ENCODE measurements at regions of chr3 and their contacts with region 1.

Region 1: GRCh38 chr3:52231502-52232293 is 6.3 kb upstream of the TLR9 start:
- DNase-seq: peak; percentile 89
- ATAC-seq: peak; percentile 93
- H3K4me3 ChIP-seq: no peak overlapping the region
- H3K4me3 Mint-ChIP-seq: peak overlapping the region; percentile 37
- H3K27ac ChIP-seq: no peak overlapping the region
- H3K27ac Mint-ChIP-seq: peak overlapping the region; percentile 85
- H3K4me1 ChIP-seq: peaks cover 20 to 44% of the 10 kb centered on the region in 2 donors
- H3K4me1 Mint-ChIP-seq: peaks cover 49% of the 10 kb centered on the region
- H3K27me3 ChIP-seq: no peaks in the 10 kb centered on the region
- H3K27me3 Mint-ChIP-seq: no peaks in the 10 kb centered on the region
- CTCF ChIP-seq: peak; percentile 94

Region 2: DNA sequence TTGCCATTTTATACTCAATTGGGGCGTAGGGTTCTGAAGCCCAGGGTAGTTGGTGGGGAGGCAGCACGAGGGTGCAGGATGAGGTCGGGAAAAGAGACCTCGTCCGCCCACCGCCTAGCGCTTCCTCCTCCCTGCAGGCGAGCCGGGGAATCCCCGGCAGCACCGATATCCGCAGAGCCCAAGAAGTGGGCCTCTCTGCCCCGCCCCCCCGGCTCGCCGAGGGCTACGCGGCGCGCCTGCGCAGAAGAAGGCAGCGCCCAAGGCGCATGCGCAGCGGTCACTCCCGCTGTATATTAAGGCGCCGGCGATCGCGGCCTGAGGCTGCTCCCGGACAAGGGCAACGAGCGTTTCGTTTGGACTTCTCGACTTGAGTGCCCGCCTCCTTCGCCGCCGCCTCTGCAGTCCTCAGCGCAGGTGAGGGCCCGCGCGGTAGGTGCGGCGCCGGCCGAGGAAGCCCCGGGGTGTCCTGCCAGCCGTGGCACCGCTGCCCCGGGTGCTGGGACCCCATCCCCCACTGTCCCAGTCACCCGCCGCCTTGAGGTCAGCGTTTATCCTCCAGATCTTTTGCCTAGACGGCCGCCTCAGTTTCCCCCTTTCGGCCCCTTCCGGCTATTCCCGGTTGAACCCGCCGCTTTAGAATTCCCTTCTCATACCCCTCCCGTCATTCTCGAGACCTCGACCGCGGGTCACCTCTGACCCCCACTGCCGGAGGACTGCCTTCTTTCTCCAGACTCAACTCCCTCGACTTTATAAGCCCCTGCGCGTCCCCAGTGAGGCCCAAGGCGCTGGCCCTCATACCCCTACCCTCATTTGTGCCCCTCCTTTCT is 33.6 kb before region 1 on chr3 and contains the start of gene ALAS1:
- CTCF ChIA-PET with region 1: interaction called, 3 read pairs
- POLR2A ChIA-PET with region 1: interaction called, 11 read pairs
- intact Hi-C with region 1: no loop called
- DNase-seq: peak; percentile 96
- ATAC-seq: peak; percentile 96
- H3K4me3 ChIP-seq: peak within 1 kb of the TSS; percentile 9 to 90 (median 86)
- H3K4me3 Mint-ChIP-seq: peak within 1 kb of the TSS; percentile 92
- H3K27ac ChIP-seq: peak within 1 kb of the TSS; percentile 41 to 79
- H3K27ac Mint-ChIP-seq: peak within 1 kb of the TSS; percentile 90
- H3K4me1 ChIP-seq: peaks cover 19 to 33% of the 10 kb centered on the region in 2 donors
- H3K4me1 Mint-ChIP-seq: peaks cover 42% of the 10 kb centered on the region
- H3K27me3 ChIP-seq: no peaks in the 10 kb centered on the region
- H3K27me3 Mint-ChIP-seq: no peaks in the 10 kb centered on the region
- CTCF ChIP-seq: no peak
- total RNA-seq, gene ALAS1: 26.1 and 28.3 TPM in 2 replicates

Region 3: DNA sequence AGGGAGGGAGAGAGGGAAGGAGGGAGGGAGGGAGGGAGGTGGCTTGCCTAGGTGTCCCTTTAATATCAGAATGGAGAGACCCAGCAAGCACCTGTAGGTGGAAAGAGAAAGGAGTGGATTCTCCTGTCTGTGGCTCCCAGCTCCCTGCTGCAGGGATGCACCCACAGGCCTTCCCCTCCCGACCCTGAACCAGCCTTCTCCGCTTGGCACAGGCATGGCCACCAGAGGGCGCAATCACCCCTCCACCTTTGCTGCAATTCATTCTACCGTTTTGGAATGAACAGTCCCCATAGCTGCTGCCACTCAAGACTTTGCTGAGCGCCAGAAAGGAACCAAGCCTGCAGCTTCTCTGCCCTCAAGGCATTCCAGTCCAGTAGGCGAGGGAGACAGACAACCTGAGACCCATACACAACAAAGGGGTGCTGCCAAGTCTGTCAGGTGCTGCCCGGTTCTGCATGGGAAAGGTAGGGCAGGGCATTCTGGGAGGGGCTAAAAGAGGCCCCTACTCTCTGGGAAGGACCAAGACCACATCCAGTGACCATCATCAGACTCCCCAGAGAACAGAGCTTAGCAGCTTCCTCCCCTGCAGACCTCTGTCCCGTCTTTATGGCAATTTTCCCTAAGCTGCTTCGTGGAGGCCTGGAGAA is 11.2 kb before region 1 on chr3:
- CTCF ChIA-PET with region 1: interaction called, 237 read pairs
- POLR2A ChIA-PET with region 1: interaction called, 28 read pairs
- intact Hi-C with region 1: loop called (anchors 1 kb)
- DNase-seq: peak; percentile 85
- ATAC-seq: peak; percentile 59
- H3K4me3 ChIP-seq: no peak overlapping the region
- H3K4me3 Mint-ChIP-seq: peak overlapping the region; percentile 66
- H3K27ac ChIP-seq: no peak overlapping the region
- H3K27ac Mint-ChIP-seq: peak overlapping the region; percentile 86
- H3K4me1 ChIP-seq: peaks cover 64 to 90% of the 10 kb centered on the region in 2 donors
- H3K4me1 Mint-ChIP-seq: peaks cover 78% of the 10 kb centered on the region
- H3K27me3 ChIP-seq: no peaks in the 10 kb centered on the region
- H3K27me3 Mint-ChIP-seq: no peaks in the 10 kb centered on the region
- CTCF ChIP-seq: peak; percentile 83

Region 4: GRCh38 chr3:52245322-52246263 is 13.9 kb after region 1 on chr3 and contains the start of gene PPM1M:
- CTCF ChIA-PET with region 1: interaction called, 34 read pairs
- POLR2A ChIA-PET with region 1: interaction called, 3 read pairs
- intact Hi-C with region 1: no loop called
- DNase-seq: peak; percentile 71
- ATAC-seq: peak; percentile 64
- H3K4me3 ChIP-seq: peak within 1 kb of the TSS; percentile 36 to 85 (median 76)
- H3K4me3 Mint-ChIP-seq: peak within 1 kb of the TSS; percentile 87
- H3K27ac ChIP-seq: peak within 1 kb of the TSS; percentile 71 to 83
- H3K27ac Mint-ChIP-seq: peak within 1 kb of the TSS; percentile 96
- H3K4me1 ChIP-seq: peaks cover 36 to 42% of the 10 kb centered on the region in 2 donors
- H3K4me1 Mint-ChIP-seq: peaks cover 55% of the 10 kb centered on the region
- H3K27me3 ChIP-seq: no peaks in the 10 kb centered on the region
- H3K27me3 Mint-ChIP-seq: no peaks in the 10 kb centered on the region
- CTCF ChIP-seq: no peak
- total RNA-seq, gene PPM1M: 45.0 and 53.6 TPM in 2 replicates

Region 5: DNA sequence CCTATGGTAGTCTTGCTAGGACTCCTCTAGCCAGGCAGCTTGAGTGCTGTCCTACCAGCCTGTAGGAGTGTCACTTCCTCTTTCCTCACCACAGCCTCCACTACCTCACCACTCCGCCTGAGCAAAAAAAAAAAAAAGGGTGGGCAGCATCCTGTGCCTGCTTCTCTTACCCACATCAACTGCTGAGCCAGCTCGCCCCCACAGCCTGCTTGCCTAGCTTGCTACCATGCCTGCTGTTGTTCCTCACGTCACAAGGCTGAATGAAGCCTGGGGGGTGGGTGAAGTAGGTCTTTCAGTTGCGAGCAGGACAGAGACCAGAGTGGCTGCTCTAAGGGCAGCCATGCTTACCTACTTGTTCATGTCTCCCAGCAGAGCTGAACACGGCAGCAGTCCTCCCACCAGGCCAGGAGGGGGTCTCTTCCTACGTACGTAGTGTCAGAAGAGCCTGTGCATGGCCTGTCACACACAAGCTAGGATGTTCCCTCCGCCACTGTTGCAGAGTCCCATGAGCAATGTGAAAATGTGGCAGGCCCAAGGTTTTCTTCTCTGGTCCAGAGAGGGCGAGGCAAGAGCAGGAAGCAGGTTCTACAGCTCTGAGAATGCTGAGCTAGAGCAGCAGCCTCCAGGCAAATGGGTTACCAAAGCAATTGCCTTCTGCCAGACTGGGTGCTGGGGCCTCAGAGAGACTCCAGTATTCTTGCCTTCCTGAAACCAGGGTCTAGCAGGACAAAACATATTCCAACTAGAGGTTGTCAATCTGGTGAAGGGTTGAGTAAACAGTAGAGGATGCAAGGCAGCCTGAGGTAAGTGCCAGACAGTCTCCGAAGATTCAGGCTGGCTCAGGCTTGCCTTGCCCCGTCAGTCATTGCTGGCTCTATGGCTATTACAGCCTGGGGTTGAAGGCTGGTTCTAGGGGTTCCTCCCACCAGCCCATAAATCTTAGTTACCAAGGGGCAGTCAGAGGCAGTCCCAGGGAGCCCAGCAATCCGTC is 21.9 kb after region 1 on chr3:
- CTCF ChIA-PET with region 1: interaction called, 32 read pairs
- POLR2A ChIA-PET with region 1: interaction called, 9 read pairs
- intact Hi-C with region 1: no loop called
- DNase-seq: peak; percentile 92
- ATAC-seq: peak; percentile 96
- H3K4me3 ChIP-seq: peak overlapping the region in 2 of 5 experiments; percentile 25 to 35
- H3K4me3 Mint-ChIP-seq: peak overlapping the region; percentile 78
- H3K27ac ChIP-seq: peak overlapping the region; percentile 72 to 89
- H3K27ac Mint-ChIP-seq: peak overlapping the region; percentile 94
- H3K4me1 ChIP-seq: peaks cover 22 to 29% of the 10 kb centered on the region in 2 donors
- H3K4me1 Mint-ChIP-seq: peaks cover 39% of the 10 kb centered on the region
- H3K27me3 ChIP-seq: no peaks in the 10 kb centered on the region
- H3K27me3 Mint-ChIP-seq: no peaks in the 10 kb centered on the region
- CTCF ChIP-seq: no peak

Region 6: GRCh38 chr3:52291508-52292181 is 59.9 kb after region 1 on chr3:
- CTCF ChIA-PET with region 1: interaction called, 265 read pairs
- POLR2A ChIA-PET with region 1: interaction called, 23 read pairs
- intact Hi-C with region 1: no loop called
- DNase-seq: peak; percentile 65
- ATAC-seq: peak; percentile 31
- H3K4me3 ChIP-seq: no peak overlapping the region
- H3K4me3 Mint-ChIP-seq: peak overlapping the region; percentile 37
- H3K27ac ChIP-seq: no peak overlapping the region
- H3K27ac Mint-ChIP-seq: peak overlapping the region; percentile 33
- H3K4me1 ChIP-seq: peaks cover 12 to 15% of the 10 kb centered on the region in 2 donors
- H3K4me1 Mint-ChIP-seq: peaks cover 30% of the 10 kb centered on the region
- H3K27me3 ChIP-seq: no peaks in the 10 kb centered on the region
- H3K27me3 Mint-ChIP-seq: no peaks in the 10 kb centered on the region
- CTCF ChIP-seq: peak; percentile 69

Region 7: GRCh38 chr3:52752045-52752660 is 520.5 kb after region 1 on chr3:
- CTCF ChIA-PET with region 1: no interaction called
- POLR2A ChIA-PET with region 1: no interaction called
- intact Hi-C with region 1: no loop called
- DNase-seq: no peak
- ATAC-seq: no peak
- H3K4me3 ChIP-seq: no peak overlapping the region
- H3K4me3 Mint-ChIP-seq: no peak overlapping the region
- H3K27ac ChIP-seq: no peak overlapping the region
- H3K27ac Mint-ChIP-seq: no peak overlapping the region
- H3K4me1 ChIP-seq: no peaks in the 10 kb centered on the region
- H3K4me1 Mint-ChIP-seq: no peaks in the 10 kb centered on the region
- H3K27me3 ChIP-seq: no peaks in the 10 kb centered on the region
- H3K27me3 Mint-ChIP-seq: no peaks in the 10 kb centered on the region
- CTCF ChIP-seq: no peak